Dorsolateral prefrontal cortex (tissue), 120 donors: ENCODE measurements at regions of chr9 and their contacts with region 1.

Region 1: GRCh38 chr9:121321016-121321503 is 49.0 kb downstream of the STOM start:
- DNase-seq: no peak
- H3K4me3 ChIP-seq: no peak overlapping the region
- H3K27ac ChIP-seq: peak overlapping the region in 46 of 59 donors; percentile 1 to 92 (median 70)
- H3K27me3 ChIP-seq: no peaks in the 10 kb centered on the region
- CTCF ChIP-seq: no peak

Region 2: DNA sequence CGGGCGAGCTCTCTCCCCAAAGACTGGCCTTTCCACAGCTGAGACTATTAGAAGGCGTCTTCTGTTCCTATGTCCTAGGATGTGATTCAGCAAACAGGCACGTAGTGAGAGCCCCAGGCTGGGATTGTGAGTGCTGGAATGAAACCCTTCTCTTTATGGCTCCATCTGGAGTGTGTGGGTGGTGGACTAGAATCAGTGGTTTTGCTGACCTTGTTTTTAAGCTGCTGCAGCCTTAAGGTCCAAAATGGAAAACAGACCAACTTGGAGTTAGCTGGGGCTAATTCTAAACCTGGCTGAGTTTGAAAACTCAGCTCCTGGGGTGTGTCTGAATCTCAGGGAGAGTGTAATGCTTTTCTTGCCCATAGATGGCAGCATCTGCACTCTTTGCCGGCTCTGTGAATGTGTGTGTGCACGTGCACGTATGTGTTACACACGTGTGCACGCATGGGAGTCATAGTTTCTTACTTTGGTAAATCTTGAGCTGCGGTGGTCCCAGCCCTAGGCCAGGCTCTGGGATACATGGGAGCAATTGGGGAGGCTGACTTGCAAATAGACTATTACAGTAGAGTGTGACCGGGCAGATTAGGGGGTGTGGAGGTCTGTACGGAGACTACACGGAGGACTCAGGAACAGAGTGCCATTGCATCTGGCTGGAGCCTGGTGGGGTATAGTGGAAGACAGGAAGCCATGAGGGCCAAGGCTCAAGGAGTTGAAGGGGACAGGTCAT is 42.4 kb before region 1 on chr9:
- intact Hi-C with region 1: no loop called
- DNase-seq: peak in 4 of 10 donors; percentile 48 to 82 (median 66)
- H3K4me3 ChIP-seq: peak overlapping the region in 9 of 59 donors; percentile 2 to 24 (median 13)
- H3K27ac ChIP-seq: peak overlapping the region; percentile 51 to 100 (median 98)
- H3K27me3 ChIP-seq: no peaks in the 10 kb centered on the region
- CTCF ChIP-seq: peak; percentile 75 to 93 (median 87)

Region 3: GRCh38 chr9:121399883-121400607 is 79.0 kb after region 1 on chr9:
- intact Hi-C with region 1: loop called (anchors 1 to 2 kb)
- DNase-seq: no peak
- H3K4me3 ChIP-seq: no peak overlapping the region
- H3K27ac ChIP-seq: no peak overlapping the region
- H3K27me3 ChIP-seq: no peaks in the 10 kb centered on the region
- CTCF ChIP-seq: peak; percentile 72 to 94 (median 82)

Region 4: DNA sequence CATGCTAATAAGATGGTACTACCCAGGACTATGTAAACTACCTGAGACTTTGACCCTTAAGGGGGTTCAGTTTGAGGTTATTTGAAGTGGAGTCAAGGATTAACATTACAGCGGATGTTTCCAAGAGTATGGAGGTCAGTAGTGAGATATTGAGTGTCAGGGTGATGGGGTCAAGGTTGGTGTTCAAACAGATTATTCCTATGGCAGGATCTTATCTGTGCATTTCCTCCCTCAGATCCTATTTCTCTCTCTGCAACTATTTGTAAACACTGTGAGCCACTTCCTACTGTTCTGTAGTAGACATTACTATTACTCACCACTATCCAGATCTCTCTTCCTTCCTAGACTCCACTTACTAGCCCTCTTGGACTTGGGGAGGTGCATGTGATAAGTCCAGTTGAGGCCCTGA is 103.0 kb after region 1 on chr9:
- intact Hi-C with region 1: loop called in 1 of 2 experiments (anchors 1 kb)
- DNase-seq: no peak
- H3K4me3 ChIP-seq: no peak overlapping the region
- H3K27ac ChIP-seq: no peak overlapping the region
- H3K27me3 ChIP-seq: peaks cover 0 to 2% (median 0%) of the 10 kb centered on the region in 45 donors
- CTCF ChIP-seq: no peak